Tibial artery (tissue), 4 donors: ENCODE measurements at regions of chr9 and their contacts with region 1.

Region 1: DNA sequence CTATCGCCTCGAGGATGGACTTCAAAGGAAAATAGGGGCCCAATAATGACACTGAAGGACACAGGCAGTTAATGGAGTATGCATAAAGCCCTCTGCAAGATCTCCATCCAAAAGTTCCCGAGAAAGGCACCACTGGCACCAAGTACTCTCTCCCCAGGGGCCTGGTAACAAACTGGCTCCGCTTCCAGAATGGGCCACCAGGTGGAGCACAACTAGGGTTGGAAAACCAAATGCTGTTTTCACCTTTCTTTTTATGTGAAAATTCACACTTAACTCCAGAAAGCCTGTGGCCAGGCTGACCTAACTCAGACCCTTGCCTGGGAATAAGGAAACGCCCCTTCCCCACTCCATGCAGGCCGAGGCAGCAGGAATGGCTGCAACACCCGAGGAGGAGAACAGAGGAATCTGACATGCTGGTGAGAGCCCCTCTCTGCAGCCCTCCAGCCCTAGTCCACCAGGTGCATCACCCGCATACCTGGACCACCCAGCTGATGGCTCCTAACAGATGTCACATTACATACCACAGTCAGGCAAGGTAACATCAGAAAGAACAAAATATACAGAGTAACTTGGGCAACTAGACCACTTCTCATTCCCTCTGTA is 42.8 kb downstream of the CAMSAP1 start:
- DNase-seq: peak; percentile 59 to 71
- H3K4me3 ChIP-seq: no peak overlapping the region
- H3K27ac ChIP-seq: no peak overlapping the region
- H3K4me1 ChIP-seq: peaks cover 0 to 5% (median 1%) of the 10 kb centered on the region in 4 donors
- H3K27me3 ChIP-seq: no peaks in the 10 kb centered on the region
- CTCF ChIP-seq: peak; percentile 65 to 80

Region 2: GRCh38 chr9:135907431-135908092 is 43.0 kb after region 1 on chr9 and contains the start of gene CAMSAP1:
- intact Hi-C with region 1: loop called (anchors 2 kb)
- DNase-seq: peak; percentile 86 to 96
- H3K4me3 ChIP-seq: peak within 1 kb of the TSS; percentile 91 to 92
- H3K27ac ChIP-seq: peak within 1 kb of the TSS; percentile 90 to 91
- H3K4me1 ChIP-seq: peaks cover 0 to 41% (median 28%) of the 10 kb centered on the region in 4 donors
- H3K27me3 ChIP-seq: no peaks in the 10 kb centered on the region
- CTCF ChIP-seq: no peak

Region 3: GRCh38 chr9:136122425-136123383 is 258.2 kb after region 1 on chr9:
- intact Hi-C with region 1: loop called (anchors 1 kb)
- DNase-seq: peak; percentile 67 to 83
- H3K4me3 ChIP-seq: no peak overlapping the region
- H3K27ac ChIP-seq: no peak overlapping the region
- H3K4me1 ChIP-seq: peaks cover 0 to 23% (median 16%) of the 10 kb centered on the region in 4 donors
- H3K27me3 ChIP-seq: peaks cover 0 to 29% of the 10 kb centered on the region in 2 donors
- CTCF ChIP-seq: peak; percentile 97 to 99